Natural killer cell (primary cell): ENCODE measurements at regions of chr2 and their contacts with region 1.

Region 1: DNA sequence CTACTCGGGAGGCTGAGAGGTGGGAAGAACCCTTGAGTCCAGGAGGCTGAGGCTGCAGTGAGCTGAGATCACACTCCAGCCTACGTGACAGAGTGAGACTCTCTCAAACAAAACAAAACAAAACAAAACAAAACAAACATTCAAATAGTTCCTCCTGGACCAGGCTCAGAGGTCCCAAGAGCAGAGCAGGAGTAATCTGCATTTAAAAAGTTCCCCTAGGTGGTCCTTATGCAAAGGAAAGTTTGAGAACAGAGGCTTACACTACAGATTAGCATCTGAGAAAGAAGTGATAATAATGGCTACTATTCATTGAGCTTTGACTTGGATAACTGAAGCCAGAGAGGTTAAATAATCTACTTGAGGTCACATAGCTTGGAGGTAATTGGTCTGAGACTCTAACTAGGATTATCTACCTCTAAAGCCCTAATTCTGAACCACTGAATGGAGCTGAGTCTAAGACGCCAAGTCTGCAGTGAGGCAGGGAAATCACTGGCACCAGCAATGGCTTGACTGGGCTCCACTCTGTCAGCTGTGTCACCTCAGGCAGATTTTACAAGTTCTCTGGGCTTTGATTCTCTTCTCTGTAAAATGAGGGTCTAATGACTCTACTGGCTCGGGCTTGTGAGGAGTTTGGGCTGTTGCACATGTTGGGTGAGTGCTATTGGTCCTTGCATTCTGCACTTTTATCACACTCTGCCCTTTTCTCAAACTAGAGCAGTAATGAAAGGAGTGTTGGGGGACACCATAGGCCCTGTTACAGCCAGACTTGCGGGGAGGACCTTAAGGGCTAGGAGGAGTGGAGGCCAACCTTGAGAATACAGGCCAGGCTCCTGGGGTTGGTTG is 29.2 kb upstream of the DLX2 start:
- DNase-seq: no peak
- ATAC-seq: no peak
- H3K4me3 ChIP-seq: no peak overlapping the region
- H3K4me3 Mint-ChIP-seq: no peak overlapping the region
- H3K27ac ChIP-seq: no peak overlapping the region
- H3K27ac Mint-ChIP-seq: no peak overlapping the region
- H3K4me1 ChIP-seq: no peaks in the 10 kb centered on the region
- H3K4me1 Mint-ChIP-seq: no peaks in the 10 kb centered on the region
- H3K27me3 ChIP-seq: no peaks in the 10 kb centered on the region
- H3K27me3 Mint-ChIP-seq: peaks cover 15 to 17% of the 10 kb centered on the region in 2 donors
- CTCF ChIP-seq: no peak

Region 2: GRCh38 chr2:171598713-171599319 is 533.1 kb before region 1 on chr2:
- intact Hi-C with region 1: loop called (anchors 1 kb)
- DNase-seq: peak in 1 of 2 donors; percentile 78
- ATAC-seq: peak; percentile 84 to 100 (median 97)
- H3K4me3 ChIP-seq: no peak overlapping the region
- H3K4me3 Mint-ChIP-seq: no peak overlapping the region
- H3K27ac ChIP-seq: no peak overlapping the region
- H3K27ac Mint-ChIP-seq: no peak overlapping the region
- H3K4me1 ChIP-seq: no peaks in the 10 kb centered on the region
- H3K4me1 Mint-ChIP-seq: peaks cover 0 to 5% of the 10 kb centered on the region in 2 donors
- H3K27me3 ChIP-seq: no peaks in the 10 kb centered on the region
- H3K27me3 Mint-ChIP-seq: peaks cover 16 to 32% of the 10 kb centered on the region in 2 donors
- CTCF ChIP-seq: peak; percentile 79

Region 3: GRCh38 chr2:171703574-171704347 is 428.2 kb before region 1 on chr2:
- intact Hi-C with region 1: loop called (anchors 5 kb)
- DNase-seq: peak in 1 of 2 donors; percentile 64
- ATAC-seq: peak in 1 of 3 donors; percentile 41
- H3K4me3 ChIP-seq: no peak overlapping the region
- H3K4me3 Mint-ChIP-seq: no peak overlapping the region
- H3K27ac ChIP-seq: no peak overlapping the region
- H3K27ac Mint-ChIP-seq: no peak overlapping the region
- H3K4me1 ChIP-seq: no peaks in the 10 kb centered on the region
- H3K4me1 Mint-ChIP-seq: peaks cover 8 to 10% of the 10 kb centered on the region in 2 donors
- H3K27me3 ChIP-seq: no peaks in the 10 kb centered on the region
- H3K27me3 Mint-ChIP-seq: no peaks in the 10 kb centered on the region
- CTCF ChIP-seq: peak; percentile 37